ENCODE measurements at regions of chr14 and their contacts with region 1.

Region 1: GRCh38 chr14:24241829-24242443 is 487 bp downstream of the TINF2 start:
- DNase-seq: peak; percentile 96
- ATAC-seq: peak; percentile 83
- H3K4me3 Mint-ChIP-seq: peak overlapping the region; percentile 96
- H3K27ac Mint-ChIP-seq: peak overlapping the region; percentile 100
- H3K4me1 Mint-ChIP-seq: peaks cover 59% of the 10 kb centered on the region
- H3K27me3 Mint-ChIP-seq: no peaks in the 10 kb centered on the region

Region 2: GRCh38 chr14:24135834-24136542 is 105.9 kb before region 1 on chr14 and contains the start of gene PSME1:
- CTCF ChIA-PET with region 1: no interaction called
- DNase-seq: peak; percentile 96
- ATAC-seq: peak; percentile 94
- H3K4me3 Mint-ChIP-seq: peak within 1 kb of the TSS; percentile 91
- H3K27ac Mint-ChIP-seq: peak within 1 kb of the TSS; percentile 85
- H3K4me1 Mint-ChIP-seq: peaks cover 52% of the 10 kb centered on the region
- H3K27me3 Mint-ChIP-seq: no peaks in the 10 kb centered on the region
- total RNA-seq, gene PSME1: 420 to 454 TPM

Region 3: GRCh38 chr14:24188251-24189058 is 53.5 kb before region 1 on chr14 and contains the start of gene IPO4:
- CTCF ChIA-PET with region 1: interaction called, 11 read pairs
- DNase-seq: peak; percentile 97
- ATAC-seq: peak; percentile 90
- H3K4me3 Mint-ChIP-seq: peak within 1 kb of the TSS; percentile 82
- H3K27ac Mint-ChIP-seq: peak within 1 kb of the TSS; percentile 74
- H3K4me1 Mint-ChIP-seq: peaks cover 49% of the 10 kb centered on the region
- H3K27me3 Mint-ChIP-seq: no peaks in the 10 kb centered on the region
- total RNA-seq, gene IPO4: 32.4 to 54.9 TPM

Region 4: DNA sequence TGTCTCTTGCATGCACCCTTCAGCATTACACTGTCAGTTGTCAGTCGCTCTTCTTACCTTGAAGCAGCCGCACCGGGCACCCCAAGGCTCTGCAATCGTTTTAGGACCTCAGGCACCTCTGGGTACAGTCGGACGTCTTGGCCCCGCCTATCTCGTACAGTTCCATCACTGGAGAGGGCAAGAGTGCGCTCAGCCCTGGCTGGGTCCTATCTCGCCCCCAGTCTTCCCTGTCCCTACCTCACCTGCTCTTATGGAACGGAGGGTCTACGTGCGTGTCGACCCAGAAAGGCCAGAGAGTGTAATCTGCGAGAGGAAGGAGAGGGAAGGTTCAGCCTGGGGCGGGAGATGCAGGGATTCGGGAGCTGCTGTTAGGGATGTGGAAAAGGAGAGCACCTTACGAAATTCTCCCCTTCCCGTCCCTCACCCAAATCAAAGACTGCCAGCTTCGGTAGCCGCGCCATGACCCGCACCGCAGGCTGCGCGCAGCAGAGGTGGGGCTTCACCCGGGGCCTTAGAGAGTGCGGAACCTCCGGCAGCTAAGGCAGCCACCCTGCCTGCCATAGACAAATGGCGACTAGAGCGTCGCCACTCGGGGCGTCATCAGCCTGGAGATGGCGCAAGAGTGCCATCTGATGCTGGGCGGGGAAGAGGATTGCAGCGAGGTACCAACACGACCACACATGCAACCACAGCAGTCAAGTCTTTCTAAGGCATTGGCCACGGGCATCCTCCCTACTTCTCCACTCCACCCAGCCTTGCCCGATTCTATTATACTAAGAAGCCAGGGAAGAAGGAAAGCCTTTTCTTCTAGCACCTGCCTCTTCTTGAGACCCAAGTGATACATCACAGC is 26.2 kb before region 1 on chr14 and contains the start of gene MDP1:
- CTCF ChIA-PET with region 1: interaction called, 48 read pairs
- DNase-seq: peak; percentile 94
- ATAC-seq: peak; percentile 76
- H3K4me3 Mint-ChIP-seq: peak within 1 kb of the TSS; percentile 97
- H3K27ac Mint-ChIP-seq: peak within 1 kb of the TSS; percentile 99
- H3K4me1 Mint-ChIP-seq: peaks cover 47% of the 10 kb centered on the region
- H3K27me3 Mint-ChIP-seq: no peaks in the 10 kb centered on the region
- total RNA-seq, gene MDP1: 11.4 to 16.9 TPM

Region 5: GRCh38 chr14:24289649-24290249 is 47.8 kb after region 1 on chr14:
- CTCF ChIA-PET with region 1: interaction called, 541 read pairs
- DNase-seq: peak; percentile 88
- ATAC-seq: peak; percentile 93
- H3K4me3 Mint-ChIP-seq: no peak overlapping the region
- H3K27ac Mint-ChIP-seq: no peak overlapping the region
- H3K4me1 Mint-ChIP-seq: peaks cover 29% of the 10 kb centered on the region
- H3K27me3 Mint-ChIP-seq: peaks cover 25% of the 10 kb centered on the region